Vagina (tissue), 2 donors: ENCODE measurements at regions of chr20 and their contacts with region 1.

Region 1: DNA sequence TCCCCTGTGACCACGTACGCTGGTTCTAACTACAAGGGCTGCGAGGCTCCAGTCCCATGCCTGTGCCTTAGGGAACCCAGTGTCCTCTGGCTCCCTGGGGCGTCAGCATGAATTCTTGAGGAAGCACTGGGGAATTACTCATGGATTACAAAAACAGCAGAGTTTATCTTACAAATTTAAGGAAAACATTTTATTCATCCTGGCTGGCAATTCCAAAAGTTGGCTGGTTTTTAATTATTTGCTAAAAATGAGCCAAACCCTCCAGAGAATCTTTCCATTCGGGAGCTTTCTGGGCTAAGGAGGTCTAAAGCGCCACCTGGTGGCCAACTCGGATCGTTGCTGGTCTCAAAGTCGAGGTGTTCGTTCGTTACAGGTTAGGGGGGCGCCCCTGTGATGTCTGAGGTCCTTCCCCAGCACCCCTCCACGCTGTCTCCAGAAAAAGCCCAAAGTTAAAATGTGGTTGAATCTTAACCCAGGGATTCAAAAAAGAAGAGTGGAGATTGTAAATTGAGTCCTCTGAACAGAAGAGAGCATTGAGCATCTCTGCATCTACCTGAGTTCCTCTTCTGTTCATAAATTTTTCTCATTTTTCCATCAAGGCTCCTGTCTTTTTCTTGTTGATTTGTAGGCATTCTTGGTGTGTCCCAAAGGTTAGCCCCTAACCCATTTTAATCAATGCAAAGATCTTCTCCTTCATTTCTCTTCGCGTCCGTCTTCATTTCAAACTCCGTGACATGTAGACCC is 99.4 kb downstream of the BFSP1 start:
- DNase-seq: no peak
- H3K4me3 ChIP-seq: no peak overlapping the region
- H3K27ac ChIP-seq: no peak overlapping the region
- H3K4me1 ChIP-seq: peaks cover 6% of the 10 kb centered on the region
- H3K27me3 ChIP-seq: no peaks in the 10 kb centered on the region
- CTCF ChIP-seq: peak; percentile 40 to 87 (median 56)
- POLR2A ChIP-seq: no peak

Region 2: DNA sequence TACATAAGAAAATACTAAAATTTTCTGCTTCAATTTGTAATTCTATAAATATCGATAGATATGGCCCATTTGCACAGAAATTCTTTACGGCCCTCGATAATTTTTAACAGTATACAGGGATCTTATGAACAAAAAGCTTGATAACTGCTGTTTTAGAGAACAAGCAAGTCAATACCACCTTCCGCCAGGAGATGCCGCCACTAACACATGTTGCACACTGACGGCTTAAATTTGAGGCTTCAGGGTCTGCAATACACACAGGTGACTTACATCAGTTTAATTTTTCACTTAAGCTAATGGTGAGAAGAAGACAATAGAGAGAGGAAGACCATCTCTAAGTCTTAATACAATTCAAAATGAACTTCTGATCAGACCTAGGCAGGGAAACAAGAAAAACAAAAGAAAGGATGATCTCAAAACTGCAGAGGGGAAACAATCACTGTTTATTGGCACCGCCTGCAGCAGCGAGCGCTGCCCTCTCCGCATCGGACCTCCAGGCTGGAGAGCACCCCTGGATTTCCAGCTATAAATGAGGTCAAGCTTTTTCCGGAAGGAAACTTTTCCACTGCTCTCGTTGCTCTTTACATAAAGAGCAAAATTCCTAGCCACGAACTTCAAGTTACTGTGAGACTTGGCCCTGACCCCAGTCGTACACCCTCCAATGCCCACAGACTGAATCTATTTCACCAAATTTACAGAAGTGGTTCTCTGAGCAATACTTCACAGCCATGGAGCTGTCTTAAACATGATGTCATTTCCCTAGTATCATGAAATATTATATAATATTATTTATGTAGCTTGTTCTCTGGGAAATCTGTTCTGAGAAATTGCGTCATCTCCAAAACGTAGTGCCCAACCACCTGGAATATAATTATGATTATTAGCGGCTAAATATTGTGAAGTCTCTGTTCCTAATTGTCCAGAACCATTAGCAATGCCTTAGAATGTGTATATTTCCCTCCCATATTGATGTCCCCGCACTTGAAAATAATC is 629.6 kb before region 1 on chr20:
- intact Hi-C with region 1: loop called (anchors 2 kb)
- DNase-seq: no peak
- H3K4me3 ChIP-seq: no peak overlapping the region
- H3K27ac ChIP-seq: no peak overlapping the region
- H3K4me1 ChIP-seq: no peaks in the 10 kb centered on the region
- H3K27me3 ChIP-seq: no peaks in the 10 kb centered on the region
- CTCF ChIP-seq: peak; percentile 56 to 64 (median 57)
- POLR2A ChIP-seq: no peak

Region 3: DNA sequence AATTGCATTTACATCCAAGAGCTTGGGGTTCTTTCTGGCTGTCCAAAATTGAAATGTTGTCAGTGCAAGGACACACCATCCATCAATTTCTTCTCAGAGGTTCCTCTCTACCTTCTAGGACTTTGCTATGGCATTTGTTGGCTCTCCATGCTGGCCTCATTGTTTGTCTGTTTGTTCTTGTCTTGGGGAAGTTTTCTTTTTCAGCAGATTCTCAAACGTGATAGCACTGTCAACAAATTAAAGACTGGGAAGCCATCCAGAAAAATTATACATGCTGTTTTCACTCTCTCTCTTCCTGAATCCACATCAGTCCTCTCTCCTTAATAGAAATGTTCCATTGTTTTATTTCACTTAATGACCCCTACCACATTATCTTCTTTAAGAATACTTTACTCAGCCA is 74.6 kb before region 1 on chr20:
- intact Hi-C with region 1: no loop called
- DNase-seq: no peak
- H3K4me3 ChIP-seq: no peak overlapping the region
- H3K27ac ChIP-seq: no peak overlapping the region
- H3K4me1 ChIP-seq: no peaks in the 10 kb centered on the region
- H3K27me3 ChIP-seq: no peaks in the 10 kb centered on the region
- CTCF ChIP-seq: no peak
- POLR2A ChIP-seq: no peak